ENCODE measurements at regions of chr1 and their contacts with region 1.

Region 1: GRCh38 chr1:201506556-201507359 is at the start of gene CSRP1:
- DNase-seq: peak; percentile 95
- CTCF ChIP-seq: no peak

Region 2: GRCh38 chr1:201447911-201448871 is 58.6 kb before region 1 on chr1:
- CTCF ChIA-PET with region 1: interaction called, 174 read pairs
- POLR2A ChIA-PET with region 1: no interaction called
- DNase-seq: peak; percentile 89
- CTCF ChIP-seq: peak; percentile 80

Region 3: GRCh38 chr1:201488817-201489589 is 17.8 kb before region 1 on chr1:
- CTCF ChIA-PET with region 1: interaction called, 685 read pairs
- POLR2A ChIA-PET with region 1: no interaction called
- DNase-seq: no peak
- CTCF ChIP-seq: no peak

Region 4: GRCh38 chr1:201530741-201531531 is 24.2 kb after region 1 on chr1:
- CTCF ChIA-PET with region 1: interaction called, 157 read pairs
- POLR2A ChIA-PET with region 1: no interaction called
- DNase-seq: peak; percentile 73
- CTCF ChIP-seq: peak; percentile 67

Measured in GM10248 (cell line).